Activated CD4-positive, alpha-beta T cell treated with anti-CD3 and anti-CD28 coated beads, Interleukin-2, amount 10 ng/mL, durations not matched to agents 24 days and 14 days (primary cell): ENCODE measurements at regions of chr6 and their contacts with region 1.

Region 1: GRCh38 chr6:110682460-110682853 is 132.8 kb downstream of the CDK19 start:
- DNase-seq: peak; percentile 92
- H3K4me3 Mint-ChIP-seq: no peak overlapping the region
- H3K27ac Mint-ChIP-seq: no peak overlapping the region
- H3K4me1 Mint-ChIP-seq: peaks cover 14% of the 10 kb centered on the region
- H3K27me3 Mint-ChIP-seq: no peaks in the 10 kb centered on the region

Region 2: GRCh38 chr6:110589865-110590513 is 92.5 kb before region 1 on chr6:
- intact Hi-C with region 1: no loop called
- DNase-seq: no peak
- H3K4me3 Mint-ChIP-seq: no peak overlapping the region
- H3K27ac Mint-ChIP-seq: peak overlapping the region; percentile 53
- H3K4me1 Mint-ChIP-seq: peaks cover 13% of the 10 kb centered on the region
- H3K27me3 Mint-ChIP-seq: no peaks in the 10 kb centered on the region

Region 3: DNA sequence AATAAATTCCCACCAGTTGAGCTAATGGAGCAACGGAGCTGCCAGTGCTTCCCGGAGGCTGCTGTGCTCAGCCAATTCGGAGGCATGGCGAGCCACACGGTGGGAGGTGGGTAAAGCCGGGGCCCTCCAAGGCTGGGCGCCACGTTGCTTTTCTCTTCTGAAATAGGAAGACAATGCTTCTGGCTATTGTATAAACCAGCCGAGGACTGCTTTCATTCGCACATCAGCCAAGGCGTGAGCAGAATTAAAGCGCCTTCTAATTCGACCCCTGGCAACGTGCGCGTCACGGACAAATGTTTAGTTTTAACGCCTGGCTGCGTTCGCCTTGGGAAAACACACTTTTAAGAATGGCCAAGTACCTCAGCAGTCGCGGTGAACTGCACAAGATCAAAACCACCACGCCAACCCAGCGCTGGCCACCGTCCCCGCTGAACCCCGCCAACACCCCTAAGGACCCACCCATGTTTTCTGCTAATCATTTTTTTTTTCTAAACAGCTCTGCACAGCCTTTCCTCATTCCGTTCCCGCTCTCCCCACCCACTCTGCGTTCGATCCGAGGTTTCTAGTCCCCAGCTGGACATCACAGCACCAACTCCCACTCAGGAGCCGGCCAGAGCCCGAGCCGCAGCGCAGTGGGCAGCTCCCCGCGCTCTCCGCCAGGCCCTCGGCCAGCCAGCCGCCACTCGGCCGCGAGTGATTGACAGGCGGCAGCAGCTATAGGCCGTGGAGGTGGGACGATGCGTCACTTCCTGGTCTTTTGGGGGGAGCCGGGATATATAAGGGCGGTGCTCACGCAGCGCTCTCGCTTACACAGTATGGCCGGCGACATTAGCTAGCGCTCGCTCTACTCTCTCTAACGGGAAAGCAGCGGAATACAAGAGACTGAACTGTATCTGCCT is 191.8 kb after region 1 on chr6 and contains the start of gene AMD1:
- intact Hi-C with region 1: loop called (anchors 1 kb)
- DNase-seq: peak; percentile 98
- H3K4me3 Mint-ChIP-seq: peak within 1 kb of the TSS; percentile 98
- H3K27ac Mint-ChIP-seq: peak within 1 kb of the TSS; percentile 99
- H3K4me1 Mint-ChIP-seq: peaks cover 27% of the 10 kb centered on the region
- H3K27me3 Mint-ChIP-seq: no peaks in the 10 kb centered on the region
- total RNA-seq, gene AMD1: 108 and 113 TPM in 2 replicates

Region 4: DNA sequence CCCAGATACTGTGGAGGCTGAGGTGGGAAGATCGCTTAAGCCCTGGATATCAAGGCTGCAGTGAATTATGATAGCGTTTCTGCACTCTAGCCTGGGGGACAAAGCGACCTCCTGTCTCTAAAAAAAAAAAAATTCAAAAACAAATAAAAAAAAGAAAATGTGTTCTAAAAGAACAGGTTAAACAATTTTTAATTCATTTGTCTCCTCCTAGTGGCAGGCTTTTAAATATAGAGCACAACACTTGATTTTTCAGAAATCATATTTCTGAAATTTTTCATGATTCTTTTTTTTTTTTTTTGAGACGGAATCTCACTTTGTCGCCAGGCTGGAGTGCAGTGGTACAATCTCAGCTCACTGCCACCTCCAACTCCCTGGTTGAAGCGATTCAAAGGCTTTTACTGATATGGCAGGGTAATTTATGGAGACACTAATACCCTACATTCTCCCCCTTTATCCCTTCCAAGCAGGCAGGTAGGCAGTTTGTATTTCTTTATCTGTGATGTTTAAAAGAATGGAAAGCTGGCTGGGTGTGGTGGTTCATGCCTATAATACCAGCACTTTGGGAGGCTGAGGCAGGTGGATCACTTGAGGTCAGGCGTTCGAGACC is 267.3 kb after region 1 on chr6:
- intact Hi-C with region 1: loop called (anchors 1 kb)
- DNase-seq: no peak
- H3K4me3 Mint-ChIP-seq: no peak overlapping the region
- H3K27ac Mint-ChIP-seq: no peak overlapping the region
- H3K4me1 Mint-ChIP-seq: peaks cover 4% of the 10 kb centered on the region
- H3K27me3 Mint-ChIP-seq: peaks cover 8% of the 10 kb centered on the region

Region 5: DNA sequence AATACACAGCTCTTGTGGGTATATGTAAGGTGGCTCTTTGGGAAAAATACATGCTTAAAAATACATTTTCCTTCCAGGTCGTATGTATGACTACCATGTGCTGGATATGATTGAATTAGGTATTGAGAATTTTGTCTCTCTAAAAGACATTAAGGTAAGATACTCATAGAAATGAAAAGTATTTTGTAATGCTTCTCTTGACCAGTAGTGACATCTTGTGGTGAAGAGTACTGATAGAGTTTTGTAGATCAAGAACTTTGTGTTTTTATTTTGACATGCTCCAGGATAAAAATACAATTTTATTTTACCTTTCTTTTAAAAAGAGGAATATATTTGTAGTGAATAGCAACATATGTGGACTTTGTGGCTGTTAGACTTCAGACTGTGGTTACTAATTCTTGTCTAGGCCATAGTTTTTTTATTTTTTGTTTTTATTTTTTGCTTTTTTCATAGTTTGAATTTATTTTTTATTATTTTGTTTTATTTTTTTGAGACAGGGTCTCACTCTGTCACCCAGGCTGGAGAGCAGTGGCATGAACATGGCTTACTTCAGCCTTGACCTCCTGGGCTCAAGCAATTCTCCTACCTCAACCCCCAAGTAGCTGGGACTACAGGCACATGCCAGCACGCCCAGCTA is 317.3 kb after region 1 on chr6:
- intact Hi-C with region 1: loop called (anchors 2 kb)
- DNase-seq: no peak
- H3K4me3 Mint-ChIP-seq: no peak overlapping the region
- H3K27ac Mint-ChIP-seq: peak overlapping the region; percentile 40
- H3K4me1 Mint-ChIP-seq: peaks cover 7% of the 10 kb centered on the region
- H3K27me3 Mint-ChIP-seq: no peaks in the 10 kb centered on the region